HepG2 (cell line): ENCODE measurements at regions of chr1 and their contacts with region 1.

Region 1: GRCh38 chr1:89589515-89589914 is 43.4 kb upstream of the LRRC8C start:
- DNase-seq: no peak
- ATAC-seq: no peak
- H3K4me3 ChIP-seq: no peak overlapping the region
- H3K27ac ChIP-seq: no peak overlapping the region
- H3K4me1 ChIP-seq: peaks cover 50% of the 10 kb centered on the region
- H3K27me3 ChIP-seq: no peaks in the 10 kb centered on the region
- CTCF ChIP-seq: no peak
- EP300 ChIP-seq: no peak
- POLR2A ChIP-seq: no peak
- RAD21 ChIP-seq: no peak

Region 2: GRCh38 chr1:88990426-88990825 is 599.1 kb before region 1 on chr1:
- CTCF ChIA-PET with region 1: no interaction called
- POLR2A ChIA-PET with region 1: interaction called, 3 read pairs
- in situ Hi-C with region 1: no loop called
- intact Hi-C with region 1: loop called (anchors 1 kb)
- DNase-seq: no peak
- ATAC-seq: no peak
- H3K4me3 ChIP-seq: peak overlapping the region in 2 of 3 experiments; percentile 95 to 97; a peak in 3 of 6 replicates
- H3K27ac ChIP-seq: peak overlapping the region; percentile 21
- H3K4me1 ChIP-seq: peaks cover 52% of the 10 kb centered on the region
- H3K27me3 ChIP-seq: no peaks in the 10 kb centered on the region
- CTCF ChIP-seq: no peak
- EP300 ChIP-seq: no peak
- POLR2A ChIP-seq: no peak
- RAD21 ChIP-seq: no peak

Region 3: DNA sequence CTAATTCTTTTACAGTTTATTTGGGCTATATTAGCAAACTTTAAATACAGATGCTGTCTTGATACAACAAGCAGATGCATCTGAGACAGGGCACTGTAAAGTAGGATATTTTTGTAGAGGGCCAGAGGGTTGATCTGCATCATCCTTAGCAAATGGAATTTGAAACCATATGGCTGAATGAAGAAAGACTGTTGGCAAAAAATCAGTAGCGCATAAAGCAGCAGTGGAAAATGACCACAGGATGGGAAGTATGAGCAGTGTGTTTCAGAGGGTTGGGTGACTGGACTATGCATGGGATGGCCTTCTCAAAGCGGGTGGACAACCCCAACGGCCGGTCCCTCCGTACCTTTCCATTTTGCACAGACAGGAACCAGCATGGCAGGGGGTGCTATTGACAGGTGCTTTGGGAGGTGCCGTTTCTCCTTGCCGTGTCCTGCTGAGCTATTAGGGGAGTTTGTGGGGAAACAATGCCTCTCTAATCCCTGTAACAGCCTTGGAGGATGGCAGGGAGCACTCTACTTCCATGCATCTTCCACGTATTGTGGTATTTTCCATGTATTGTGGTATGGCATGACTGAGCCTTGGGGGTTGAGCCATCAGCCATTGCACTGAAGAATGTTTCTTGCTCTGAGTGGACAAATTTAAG is 58.9 kb before region 1 on chr1:
- CTCF ChIA-PET with region 1: no interaction called
- POLR2A ChIA-PET with region 1: no interaction called
- in situ Hi-C with region 1: loop called (anchors 5 kb)
- intact Hi-C with region 1: no loop called
- DNase-seq: no peak
- ATAC-seq: no peak
- H3K4me3 ChIP-seq: no peak overlapping the region
- H3K27ac ChIP-seq: no peak overlapping the region
- H3K4me1 ChIP-seq: peaks cover 46% of the 10 kb centered on the region
- H3K27me3 ChIP-seq: no peaks in the 10 kb centered on the region
- CTCF ChIP-seq: no peak
- EP300 ChIP-seq: no peak
- POLR2A ChIP-seq: no peak
- RAD21 ChIP-seq: no peak

Region 4: DNA sequence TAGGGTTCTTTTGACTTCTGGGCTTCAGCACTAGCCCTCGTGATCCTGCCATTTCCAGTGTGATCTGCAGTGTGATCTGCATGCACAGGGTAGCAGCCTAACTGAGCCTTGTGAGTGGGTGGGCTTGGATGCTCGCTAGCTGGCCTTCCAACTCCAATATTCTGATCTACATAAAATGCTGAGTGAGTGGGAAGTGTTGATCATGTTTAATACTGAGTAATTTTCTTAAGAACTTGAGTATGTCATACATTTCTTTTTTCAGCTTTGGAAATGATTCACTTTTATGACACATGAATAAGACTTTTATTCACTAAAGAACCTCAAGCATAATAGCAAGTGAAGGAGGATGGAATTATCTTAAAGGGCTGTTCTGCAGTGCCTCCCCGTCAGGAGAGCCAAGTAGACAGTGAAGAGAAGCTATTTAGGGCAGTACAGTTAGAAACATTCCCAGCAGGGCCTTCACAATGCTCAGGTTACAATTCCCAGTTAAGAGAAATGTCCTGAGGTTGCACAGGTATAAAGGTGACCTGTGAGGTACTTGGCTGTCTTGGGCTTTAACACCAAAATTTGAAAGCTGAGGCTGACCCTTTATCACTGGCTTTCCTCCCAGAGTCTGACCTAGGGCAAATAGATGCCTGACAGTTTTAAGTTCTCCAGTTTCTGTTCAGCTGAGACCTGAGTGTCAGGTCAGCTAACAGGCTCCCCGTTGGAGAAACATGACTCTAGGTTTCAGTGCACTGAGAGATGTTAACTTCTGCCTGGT is 14.3 kb after region 1 on chr1:
- CTCF ChIA-PET with region 1: no interaction called
- POLR2A ChIA-PET with region 1: no interaction called
- in situ Hi-C with region 1: no loop called
- intact Hi-C with region 1: no loop called
- DNase-seq: no peak
- ATAC-seq: no peak
- H3K4me3 ChIP-seq: no peak overlapping the region
- H3K27ac ChIP-seq: no peak overlapping the region
- H3K4me1 ChIP-seq: peaks cover 14% of the 10 kb centered on the region
- H3K27me3 ChIP-seq: no peaks in the 10 kb centered on the region
- CTCF ChIP-seq: no peak
- EP300 ChIP-seq: no peak
- POLR2A ChIP-seq: no peak
- RAD21 ChIP-seq: no peak

Region 5: DNA sequence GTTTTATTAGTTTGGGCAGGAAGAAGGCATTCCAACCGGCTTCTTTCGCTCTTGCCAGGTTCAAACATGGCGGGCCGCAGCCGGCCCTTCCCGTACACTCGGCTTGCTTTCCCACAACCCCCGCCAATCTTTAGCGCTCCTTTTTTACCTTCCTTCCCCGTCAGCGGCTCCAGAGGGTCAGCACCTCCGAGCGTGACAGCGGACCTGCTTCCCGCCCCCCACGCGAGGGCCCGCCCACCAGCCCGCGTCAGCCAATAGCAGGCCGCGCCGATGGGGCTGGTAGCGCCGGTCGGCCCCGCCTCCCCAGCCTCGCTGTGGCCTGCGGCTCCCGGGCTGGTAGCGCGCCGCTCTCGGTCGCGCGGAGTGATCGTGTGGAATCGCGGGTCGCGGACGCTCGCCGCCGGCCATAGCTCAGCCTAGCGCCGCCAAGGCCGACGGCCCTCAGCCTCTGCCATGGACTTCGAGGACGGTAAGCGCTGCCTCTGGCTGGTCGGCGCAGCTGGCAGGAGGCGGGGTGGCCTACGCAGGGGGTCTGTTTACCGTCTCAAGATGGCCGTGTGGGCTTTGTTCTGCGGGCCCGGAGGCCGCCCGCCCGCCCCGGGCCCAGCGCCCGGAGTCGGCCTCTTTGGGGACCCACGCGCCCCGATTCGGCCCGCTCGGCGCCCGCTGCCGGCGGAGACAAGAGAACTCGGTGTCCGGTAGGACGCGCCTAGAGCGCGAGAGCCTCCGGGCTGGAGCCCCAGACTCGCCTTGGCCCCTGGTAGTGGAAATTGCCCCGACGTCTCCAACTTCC is 405.5 kb after region 1 on chr1 and contains the start of gene ZNF326:
- CTCF ChIA-PET with region 1: no interaction called
- POLR2A ChIA-PET with region 1: no interaction called
- in situ Hi-C with region 1: no loop called
- intact Hi-C with region 1: loop called (anchors 10 kb)
- DNase-seq: peak; percentile 92
- ATAC-seq: peak; percentile 96
- H3K4me3 ChIP-seq: peak within 1 kb of the TSS; percentile 79 to 94 (median 88)
- H3K27ac ChIP-seq: peak within 1 kb of the TSS; percentile 96
- H3K4me1 ChIP-seq: peaks cover 70% of the 10 kb centered on the region
- H3K27me3 ChIP-seq: no peaks in the 10 kb centered on the region; a peak in 1 of 5 replicates
- CTCF ChIP-seq: peak; percentile 44
- EP300 ChIP-seq: no peak; a peak in 1 of 4 replicates
- POLR2A ChIP-seq: peak; percentile 96 to 97
- RAD21 ChIP-seq: peak; percentile 59
- total RNA-seq, gene ZNF326: 16.4 and 20.9 TPM in 2 replicates